Dendritic cell treated with granulocyte-macrophage colony-stimulating factor and Interleukin-4, amounts not matched to agents 40 ng/mL and 50 ng/mL, for 4 days (primary cell): ENCODE measurements at regions of chr7 and their contacts with region 1.

Region 1: DNA sequence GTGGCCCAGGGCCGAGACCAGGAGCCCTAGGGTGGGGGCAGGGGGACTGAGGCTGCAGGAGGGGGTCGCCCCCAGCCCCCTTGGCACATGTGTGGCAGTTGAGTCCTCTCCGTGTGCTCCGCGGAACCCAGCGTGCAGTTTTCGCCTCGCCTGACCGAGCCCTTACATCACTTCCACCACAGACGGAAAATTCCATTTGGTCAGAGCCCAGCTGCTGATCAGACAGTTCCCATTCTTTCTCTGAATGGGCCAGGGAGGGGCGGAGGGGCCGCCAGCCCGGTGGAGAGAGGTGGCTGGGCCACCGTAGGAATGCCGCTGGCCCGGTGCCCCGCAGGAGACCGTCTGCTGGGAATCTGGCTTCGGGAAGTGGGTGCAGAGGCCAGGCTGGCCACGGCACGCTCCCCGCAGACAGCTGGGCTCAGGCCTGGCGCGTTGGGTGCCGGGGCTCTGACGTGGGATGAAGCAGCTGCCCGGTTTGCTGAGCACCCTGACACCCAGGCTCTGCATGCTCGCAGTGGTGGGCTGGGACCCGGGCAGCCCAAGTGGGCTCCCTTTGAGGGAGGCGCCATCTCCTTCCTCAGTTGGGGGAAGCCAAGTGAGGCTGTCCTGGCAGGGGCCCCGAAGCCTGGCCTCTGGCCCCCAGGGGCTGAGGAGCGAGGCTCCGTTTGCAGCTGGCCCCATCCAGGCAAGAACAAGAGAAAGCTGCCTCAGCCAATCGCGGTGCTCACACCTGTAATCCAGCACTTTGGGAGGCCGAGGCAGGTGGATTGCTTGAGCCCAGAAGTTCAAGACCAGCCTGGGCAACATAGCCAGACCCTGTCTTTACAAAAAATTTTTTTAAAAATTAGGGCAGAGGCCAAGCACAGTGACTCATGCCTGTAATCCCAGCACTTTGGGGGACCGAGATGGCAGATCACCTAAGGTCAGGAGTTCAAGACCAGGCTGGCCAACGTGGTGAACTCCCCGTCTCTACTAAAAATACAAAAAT is 9.9 kb downstream of the TTYH3 start:
- H3K4me3 Mint-ChIP-seq: peak overlapping the region; percentile 67
- H3K27ac Mint-ChIP-seq: peak overlapping the region; percentile 100
- H3K4me1 Mint-ChIP-seq: peaks cover 89% of the 10 kb centered on the region
- H3K27me3 Mint-ChIP-seq: no peaks in the 10 kb centered on the region

Region 2: DNA sequence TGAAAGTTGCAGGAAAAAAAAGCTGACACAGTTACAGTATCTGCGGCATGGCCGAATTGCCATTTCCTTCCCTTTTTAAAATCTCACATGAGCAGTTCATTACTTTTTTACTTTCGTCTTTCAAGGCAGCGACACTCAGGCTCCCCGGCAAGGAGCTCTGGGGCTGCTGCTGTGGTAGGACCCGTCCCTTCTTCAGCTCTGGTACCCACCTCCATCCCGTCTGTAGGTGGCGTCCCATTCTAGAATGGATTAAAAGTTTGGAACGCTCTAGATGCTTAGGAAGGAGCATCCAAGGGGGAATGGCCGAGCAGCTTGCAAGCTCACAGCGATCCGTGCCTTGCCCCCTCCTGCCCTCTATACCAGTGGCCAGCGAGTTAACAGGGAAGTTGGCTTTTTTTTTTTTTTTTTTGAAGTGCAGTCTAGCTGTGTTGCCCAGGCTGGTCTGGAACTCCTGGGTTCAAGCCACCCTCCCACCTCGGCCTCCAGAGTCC is 32.7 kb before region 1 on chr7:
- intact Hi-C with region 1: loop called (anchors 5 kb)
- H3K4me3 Mint-ChIP-seq: peak overlapping the region; percentile 66
- H3K27ac Mint-ChIP-seq: peak overlapping the region; percentile 99
- H3K4me1 Mint-ChIP-seq: peaks cover 82% of the 10 kb centered on the region
- H3K27me3 Mint-ChIP-seq: peaks cover 5% of the 10 kb centered on the region